Caco-2 (cell line): ENCODE measurements at regions of chr14 and their contacts with region 1.

Region 1: GRCh38 chr14:37246427-37246914 is 48.7 kb downstream of the MIPOL1 start:
- DNase-seq: peak in 1 of 2 experiments; percentile 35
- H3K4me3 ChIP-seq: no peak overlapping the region
- H3K4me3 Mint-ChIP-seq: no peak overlapping the region
- H3K27ac Mint-ChIP-seq: no peak overlapping the region
- H3K4me1 ChIP-seq: peaks cover 36% of the 10 kb centered on the region
- H3K4me1 Mint-ChIP-seq: peaks cover 5% of the 10 kb centered on the region
- H3K27me3 ChIP-seq: no peaks in the 10 kb centered on the region
- H3K27me3 Mint-ChIP-seq: no peaks in the 10 kb centered on the region
- CTCF ChIP-seq: peak; percentile 68 to 87

Region 2: GRCh38 chr14:37329189-37330001 is 82.9 kb after region 1 on chr14:
- CTCF ChIA-PET with region 1: no interaction called
- POLR2A ChIA-PET with region 1: no interaction called
- intact Hi-C with region 1: loop called (anchors 5 kb)
- DNase-seq: peak in 1 of 2 experiments; percentile 27
- H3K4me3 ChIP-seq: no peak overlapping the region
- H3K4me3 Mint-ChIP-seq: peak overlapping the region; percentile 56
- H3K27ac Mint-ChIP-seq: peak overlapping the region; percentile 65
- H3K4me1 ChIP-seq: peaks cover 23% of the 10 kb centered on the region
- H3K4me1 Mint-ChIP-seq: peaks cover 15% of the 10 kb centered on the region
- H3K27me3 ChIP-seq: no peaks in the 10 kb centered on the region
- H3K27me3 Mint-ChIP-seq: no peaks in the 10 kb centered on the region
- CTCF ChIP-seq: no peak

Region 3: GRCh38 chr14:37403626-37404025 is 157.2 kb after region 1 on chr14:
- CTCF ChIA-PET with region 1: no interaction called
- POLR2A ChIA-PET with region 1: no interaction called
- intact Hi-C with region 1: loop called (anchors 5 kb)
- DNase-seq: no peak
- H3K4me3 ChIP-seq: no peak overlapping the region
- H3K4me3 Mint-ChIP-seq: no peak overlapping the region
- H3K27ac Mint-ChIP-seq: no peak overlapping the region
- H3K4me1 ChIP-seq: peaks cover 82% of the 10 kb centered on the region
- H3K4me1 Mint-ChIP-seq: peaks cover 44% of the 10 kb centered on the region
- H3K27me3 ChIP-seq: no peaks in the 10 kb centered on the region
- H3K27me3 Mint-ChIP-seq: no peaks in the 10 kb centered on the region
- CTCF ChIP-seq: no peak

Region 4: DNA sequence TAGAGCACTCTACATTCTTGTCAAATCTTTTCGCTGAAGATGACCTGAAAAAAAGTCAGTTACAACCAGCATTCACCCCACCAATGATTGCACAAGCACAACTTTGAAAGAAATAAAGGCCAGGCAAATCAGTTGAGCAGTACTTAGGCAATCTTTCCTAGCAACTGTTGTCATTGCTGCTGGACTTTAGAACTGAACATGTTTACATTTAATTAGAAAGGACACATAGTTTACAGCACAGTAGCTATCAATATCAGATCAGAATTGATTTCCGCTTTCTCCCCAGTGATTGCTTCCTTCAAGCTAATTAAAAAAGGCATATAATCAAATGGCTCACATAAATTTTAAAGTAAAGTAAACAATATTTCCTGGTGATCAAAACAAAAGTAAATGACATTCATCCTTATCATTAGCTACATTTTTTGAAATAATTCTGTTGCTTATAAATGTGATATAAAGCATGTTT is 220.2 kb after region 1 on chr14:
- CTCF ChIA-PET with region 1: no interaction called
- POLR2A ChIA-PET with region 1: no interaction called
- intact Hi-C with region 1: loop called (anchors 1 kb)
- DNase-seq: peak; percentile 85 to 88
- H3K4me3 ChIP-seq: no peak overlapping the region
- H3K4me3 Mint-ChIP-seq: peak overlapping the region; percentile 48
- H3K27ac Mint-ChIP-seq: peak overlapping the region; percentile 91
- H3K4me1 ChIP-seq: peaks cover 24% of the 10 kb centered on the region
- H3K4me1 Mint-ChIP-seq: peaks cover 11% of the 10 kb centered on the region
- H3K27me3 ChIP-seq: no peaks in the 10 kb centered on the region
- H3K27me3 Mint-ChIP-seq: no peaks in the 10 kb centered on the region
- CTCF ChIP-seq: no peak

Region 5: DNA sequence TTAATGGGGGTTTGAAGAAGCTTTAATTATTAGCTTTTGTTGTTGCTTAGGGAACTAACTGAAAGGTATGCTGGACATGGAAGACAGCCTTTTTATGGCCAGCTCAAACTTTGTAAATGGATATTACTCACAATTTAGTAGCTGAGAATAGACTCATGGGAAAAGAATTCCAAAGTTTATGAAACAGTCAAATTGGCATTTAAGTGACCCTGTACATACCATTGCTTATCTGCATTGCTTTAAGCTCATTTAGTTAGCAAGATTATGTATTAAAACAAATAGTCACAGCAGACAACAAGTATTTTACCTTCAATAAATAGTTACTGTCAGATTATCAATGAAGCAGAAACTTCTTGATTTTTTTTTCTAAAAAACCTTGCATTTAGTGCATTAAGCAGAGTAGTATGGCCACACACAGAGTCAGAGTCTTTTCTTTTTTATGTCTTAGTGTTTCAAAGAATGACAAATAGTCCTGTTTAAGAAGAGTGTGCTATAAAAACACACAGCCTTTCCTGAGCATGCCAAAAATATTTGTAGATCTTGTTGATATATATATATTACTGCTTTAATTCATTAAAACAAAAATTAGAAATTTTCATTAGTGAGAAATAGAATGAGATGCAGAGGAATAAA is 451.1 kb after region 1 on chr14:
- CTCF ChIA-PET with region 1: no interaction called
- POLR2A ChIA-PET with region 1: no interaction called
- intact Hi-C with region 1: loop called (anchors 5 kb)
- DNase-seq: peak in 1 of 2 experiments; percentile 43
- H3K4me3 ChIP-seq: no peak overlapping the region
- H3K4me3 Mint-ChIP-seq: no peak overlapping the region
- H3K27ac Mint-ChIP-seq: no peak overlapping the region
- H3K4me1 ChIP-seq: peaks cover 36% of the 10 kb centered on the region
- H3K4me1 Mint-ChIP-seq: peaks cover 19% of the 10 kb centered on the region
- H3K27me3 ChIP-seq: no peaks in the 10 kb centered on the region
- H3K27me3 Mint-ChIP-seq: no peaks in the 10 kb centered on the region
- CTCF ChIP-seq: no peak

Region 6: DNA sequence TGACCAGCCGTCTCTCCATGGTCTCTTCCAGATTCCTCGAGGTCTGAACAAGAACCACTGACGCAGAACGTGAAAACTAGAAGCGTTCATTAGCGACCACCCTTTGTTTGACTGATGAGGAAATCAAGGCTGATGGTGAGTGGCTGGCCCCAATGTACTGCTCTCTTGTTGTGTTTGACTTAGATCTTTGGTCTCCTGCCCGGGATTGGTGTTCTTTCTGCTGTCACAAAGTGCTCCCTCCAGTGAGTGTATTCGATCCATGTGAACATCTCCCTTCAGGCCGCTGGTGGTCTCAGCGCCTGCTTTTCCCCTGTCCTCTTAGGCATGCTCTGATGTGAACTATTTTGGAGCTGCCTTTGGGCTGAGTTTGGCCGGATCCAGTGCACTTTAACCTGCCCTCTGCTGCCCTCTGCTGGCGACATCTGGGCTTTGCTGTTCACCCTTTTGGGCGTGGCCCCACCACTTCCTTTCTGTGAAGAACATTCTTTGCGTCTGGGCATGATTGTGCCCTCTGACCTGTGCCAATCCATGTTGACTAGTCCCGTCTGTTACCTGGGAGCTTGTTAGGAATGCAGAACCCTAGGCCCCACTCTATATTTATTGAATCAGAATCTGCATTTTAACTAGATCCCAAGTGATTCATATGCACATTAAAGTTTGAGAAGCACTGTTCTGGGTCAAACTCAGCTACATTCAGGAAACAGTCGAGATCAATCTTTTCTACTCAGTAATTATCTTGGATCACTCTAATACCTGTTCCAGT is 628.1 kb after region 1 on chr14:
- CTCF ChIA-PET with region 1: no interaction called
- POLR2A ChIA-PET with region 1: no interaction called
- intact Hi-C with region 1: loop called (anchors 1 kb)
- DNase-seq: peak; percentile 80 to 90
- H3K4me3 ChIP-seq: no peak overlapping the region
- H3K4me3 Mint-ChIP-seq: peak overlapping the region; percentile 9
- H3K27ac Mint-ChIP-seq: peak overlapping the region; percentile 36
- H3K4me1 ChIP-seq: peaks cover 9% of the 10 kb centered on the region; the same call in 1 of the 2 replicates
- H3K4me1 Mint-ChIP-seq: peaks cover 21% of the 10 kb centered on the region
- H3K27me3 ChIP-seq: no peaks in the 10 kb centered on the region
- H3K27me3 Mint-ChIP-seq: no peaks in the 10 kb centered on the region
- CTCF ChIP-seq: peak; percentile 83 to 87

Region 7: DNA sequence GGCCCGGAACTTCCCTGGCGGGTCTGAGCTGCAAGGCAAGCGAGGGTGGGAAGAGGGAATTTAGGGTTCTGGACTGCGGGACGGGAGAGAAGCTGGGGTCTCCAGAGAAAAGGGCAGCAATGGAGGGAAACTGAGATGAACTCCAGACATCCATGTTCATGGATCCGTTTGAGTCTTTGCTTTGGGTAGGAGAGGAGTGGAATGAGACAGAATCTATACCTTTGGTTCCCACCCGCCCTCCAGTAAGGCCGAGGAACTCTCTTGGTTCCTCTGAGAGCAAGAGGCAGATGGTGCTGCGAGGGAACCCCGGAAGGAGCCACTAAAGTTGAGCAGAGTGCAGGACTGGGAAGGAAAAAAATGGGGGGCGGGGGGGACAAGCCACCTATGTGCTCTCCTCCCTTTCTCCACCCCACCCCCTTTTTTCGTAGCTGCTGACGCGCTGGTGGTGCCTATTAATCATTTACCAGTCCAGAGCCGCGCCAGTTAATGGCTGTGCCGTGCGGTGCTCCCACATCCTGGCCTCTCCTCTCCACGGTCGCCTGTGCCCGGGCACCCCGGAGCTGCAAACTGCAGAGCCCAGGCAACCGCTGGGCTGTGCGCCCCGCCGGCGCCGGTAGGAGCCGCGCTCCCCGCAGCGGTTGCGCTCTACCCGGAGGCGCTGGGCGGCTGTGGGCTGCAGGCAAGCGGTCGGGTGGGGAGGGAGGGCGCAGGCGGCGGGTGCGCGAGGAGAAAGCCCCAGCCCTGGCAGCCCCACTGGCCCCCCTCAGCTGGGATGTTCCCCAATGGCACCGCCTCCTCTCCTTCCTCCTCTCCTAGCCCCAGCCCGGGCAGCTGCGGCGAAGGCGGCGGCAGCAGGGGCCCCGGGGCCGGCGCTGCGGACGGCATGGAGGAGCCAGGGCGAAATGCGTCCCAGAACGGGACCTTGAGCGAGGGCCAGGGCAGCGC is 962.4 kb after region 1 on chr14:
- CTCF ChIA-PET with region 1: no interaction called
- POLR2A ChIA-PET with region 1: no interaction called
- intact Hi-C with region 1: loop called (anchors 5 kb)
- DNase-seq: peak; percentile 85 to 88
- H3K4me3 ChIP-seq: peak overlapping the region; percentile 49
- H3K4me3 Mint-ChIP-seq: peak overlapping the region; percentile 94
- H3K27ac Mint-ChIP-seq: peak overlapping the region; percentile 86
- H3K4me1 ChIP-seq: peaks cover 6% of the 10 kb centered on the region
- H3K4me1 Mint-ChIP-seq: peaks cover 12% of the 10 kb centered on the region
- H3K27me3 ChIP-seq: no peaks in the 10 kb centered on the region
- H3K27me3 Mint-ChIP-seq: no peaks in the 10 kb centered on the region
- CTCF ChIP-seq: peak in 1 of 2 experiments; percentile 35